IMR-90 (cell line): ENCODE measurements at regions of chr16 and their contacts with region 1.

Region 1: GRCh38 chr16:75198135-75198600 is 8.8 kb downstream of the CTRB2 start:
- DNase-seq: peak; percentile 53
- ATAC-seq: peak; percentile 80
- H3K4me3 ChIP-seq: no peak overlapping the region
- H3K27ac ChIP-seq: no peak overlapping the region
- H3K4me1 ChIP-seq: peaks cover 5% of the 10 kb centered on the region; the same call in 1 of the 2 replicates
- H3K27me3 ChIP-seq: peaks cover 10% of the 10 kb centered on the region; the same call in 1 of the 2 replicates
- CTCF ChIP-seq: no peak
- POLR2A ChIP-seq: no peak
- RAD21 ChIP-seq: no peak

Region 2: DNA sequence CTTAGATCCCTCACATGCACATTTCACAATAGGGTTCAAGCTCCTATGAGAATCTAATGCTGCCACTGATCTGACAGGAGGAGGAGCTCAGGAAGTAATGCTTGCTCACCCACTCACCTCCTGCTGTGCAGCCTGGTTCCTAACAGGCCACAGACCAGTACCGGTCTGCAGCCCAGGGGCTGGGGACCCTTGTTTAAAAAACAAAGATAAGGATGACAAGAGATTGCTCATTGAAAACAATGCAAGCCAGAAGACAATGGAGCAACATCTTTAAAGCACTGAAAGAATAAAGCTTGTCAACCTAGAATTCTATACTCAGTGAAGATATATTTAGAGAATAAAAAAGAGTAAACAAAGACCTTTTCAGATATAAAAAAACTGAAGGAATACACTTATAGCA is 400.8 kb before region 1 on chr16:
- CTCF ChIA-PET with region 1: no interaction called
- POLR2A ChIA-PET with region 1: no interaction called
- dilution Hi-C with region 1: no loop called
- in situ Hi-C with region 1: no loop called
- intact Hi-C with region 1: no loop called
- DNase-seq: no peak
- ATAC-seq: no peak
- H3K4me3 ChIP-seq: no peak overlapping the region
- H3K27ac ChIP-seq: no peak overlapping the region
- H3K4me1 ChIP-seq: no peaks in the 10 kb centered on the region
- H3K27me3 ChIP-seq: peaks cover 14% of the 10 kb centered on the region
- CTCF ChIP-seq: no peak
- POLR2A ChIP-seq: no peak
- RAD21 ChIP-seq: no peak

Region 3: GRCh38 chr16:74998481-74999218 is 199.5 kb before region 1 on chr16 and contains the start of gene ZNRF1:
- CTCF ChIA-PET with region 1: no interaction called
- POLR2A ChIA-PET with region 1: no interaction called
- dilution Hi-C with region 1: no loop called
- in situ Hi-C with region 1: no loop called
- intact Hi-C with region 1: loop called (anchors 2 kb)
- DNase-seq: peak; percentile 71
- ATAC-seq: peak; percentile 91
- H3K4me3 ChIP-seq: peak within 1 kb of the TSS; percentile 79
- H3K27ac ChIP-seq: peak within 1 kb of the TSS; percentile 62
- H3K4me1 ChIP-seq: peaks cover 10% of the 10 kb centered on the region
- H3K27me3 ChIP-seq: no peaks in the 10 kb centered on the region
- CTCF ChIP-seq: peak; percentile 73
- POLR2A ChIP-seq: 0 out of 2 replicates have a peak, but pooled peaks have one; percentile 10
- RAD21 ChIP-seq: peak; percentile 80
- total RNA-seq, gene ZNRF1: 8.2 and 9.7 TPM in 2 replicates

Region 4: GRCh38 chr16:75385507-75386152 is 187.5 kb after region 1 on chr16:
- CTCF ChIA-PET with region 1: interaction called, 6 read pairs
- POLR2A ChIA-PET with region 1: no interaction called
- dilution Hi-C with region 1: no loop called
- in situ Hi-C with region 1: no loop called
- intact Hi-C with region 1: loop called (anchors 1 kb)
- DNase-seq: peak; percentile 88
- ATAC-seq: peak; percentile 33
- H3K4me3 ChIP-seq: no peak overlapping the region
- H3K27ac ChIP-seq: no peak overlapping the region
- H3K4me1 ChIP-seq: peaks cover 21% of the 10 kb centered on the region
- H3K27me3 ChIP-seq: no peaks in the 10 kb centered on the region
- CTCF ChIP-seq: peak; percentile 74
- POLR2A ChIP-seq: no peak
- RAD21 ChIP-seq: peak; percentile 85

Region 5: GRCh38 chr16:75402821-75403475 is 204.8 kb after region 1 on chr16:
- CTCF ChIA-PET with region 1: interaction called, 12 read pairs
- POLR2A ChIA-PET with region 1: no interaction called
- dilution Hi-C with region 1: no loop called
- in situ Hi-C with region 1: no loop called
- intact Hi-C with region 1: loop called (anchors 1 kb)
- DNase-seq: peak; percentile 60
- ATAC-seq: peak; percentile 81
- H3K4me3 ChIP-seq: no peak overlapping the region
- H3K27ac ChIP-seq: no peak overlapping the region
- H3K4me1 ChIP-seq: peaks cover 4% of the 10 kb centered on the region; the same call in 1 of the 2 replicates
- H3K27me3 ChIP-seq: no peaks in the 10 kb centered on the region
- CTCF ChIP-seq: peak; percentile 72
- POLR2A ChIP-seq: no peak
- RAD21 ChIP-seq: peak; percentile 65

Region 6: GRCh38 chr16:75464130-75464918 is 266.2 kb after region 1 on chr16 and contains the start of gene TMEM170A:
- CTCF ChIA-PET with region 1: interaction called, 7 read pairs
- POLR2A ChIA-PET with region 1: no interaction called
- dilution Hi-C with region 1: no loop called
- in situ Hi-C with region 1: no loop called
- intact Hi-C with region 1: loop called (anchors 1 kb)
- DNase-seq: peak; percentile 98
- ATAC-seq: peak; percentile 93
- H3K4me3 ChIP-seq: peak within 1 kb of the TSS; percentile 85
- H3K27ac ChIP-seq: peak within 1 kb of the TSS; percentile 82
- H3K4me1 ChIP-seq: no peaks in the 10 kb centered on the region; the same call in 1 of the 2 replicates
- H3K27me3 ChIP-seq: no peaks in the 10 kb centered on the region
- CTCF ChIP-seq: peak; percentile 100; the same call in 1 of the 2 replicates
- POLR2A ChIP-seq: peak; percentile 90
- RAD21 ChIP-seq: peak; percentile 77
- total RNA-seq, gene TMEM170A: 10.9 and 16.7 TPM in 2 replicates

Region 7: DNA sequence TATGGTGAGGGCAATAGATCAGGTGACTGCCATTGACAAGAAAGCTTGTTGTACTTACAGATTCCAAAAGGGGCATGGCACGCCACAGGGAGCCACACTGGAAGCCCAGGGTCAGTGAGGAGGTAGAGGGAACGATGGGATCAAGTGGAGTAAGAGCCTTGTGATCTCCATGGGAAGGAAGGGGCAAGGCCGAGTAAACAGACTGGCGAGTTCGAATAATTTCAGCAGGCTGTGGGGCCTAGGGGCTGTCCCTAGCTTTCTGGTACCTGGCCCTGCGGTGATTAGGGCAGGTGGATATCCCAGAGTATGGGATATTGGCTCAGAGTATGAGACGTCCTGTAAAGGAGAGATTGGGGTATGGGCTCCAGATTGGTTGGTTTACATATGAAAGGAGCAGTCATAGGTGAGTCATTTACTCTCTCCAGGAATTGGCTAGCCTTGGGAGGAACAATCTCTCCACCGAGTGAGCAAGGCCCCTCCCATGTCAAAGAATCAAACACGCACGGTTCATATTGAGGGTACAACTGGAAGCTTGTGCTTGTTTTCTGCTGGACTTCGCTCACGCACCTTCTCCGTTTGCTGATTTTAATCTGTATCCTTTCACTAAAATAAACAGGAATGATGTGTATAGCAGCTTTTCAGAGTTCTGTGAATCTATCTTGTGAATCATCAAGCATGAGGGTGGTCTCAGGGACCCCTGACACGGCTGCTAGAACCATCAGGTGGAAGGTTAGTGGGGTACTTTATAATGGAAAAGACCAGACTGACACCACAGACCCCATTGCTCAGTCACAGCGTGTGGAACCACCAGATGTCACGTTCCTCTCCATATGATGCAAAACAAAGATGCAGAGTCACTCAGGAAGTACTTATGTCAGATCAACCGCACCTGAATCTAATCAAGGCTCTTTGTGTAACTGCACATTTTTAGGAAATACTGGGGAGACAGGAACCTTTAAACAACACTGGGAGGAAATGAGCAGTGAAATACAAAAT is 396.0 kb after region 1 on chr16:
- CTCF ChIA-PET with region 1: interaction called, 3 read pairs
- POLR2A ChIA-PET with region 1: no interaction called
- dilution Hi-C with region 1: no loop called
- in situ Hi-C with region 1: loop called (anchors 25 kb)
- intact Hi-C with region 1: loop called (anchors 1 kb)
- DNase-seq: peak; percentile 83
- ATAC-seq: peak; percentile 52; the same call in 1 of the 2 replicates
- H3K4me3 ChIP-seq: no peak overlapping the region
- H3K27ac ChIP-seq: no peak overlapping the region
- H3K4me1 ChIP-seq: peaks cover 6% of the 10 kb centered on the region
- H3K27me3 ChIP-seq: no peaks in the 10 kb centered on the region
- CTCF ChIP-seq: no peak
- POLR2A ChIP-seq: no peak
- RAD21 ChIP-seq: no peak

Region 8: DNA sequence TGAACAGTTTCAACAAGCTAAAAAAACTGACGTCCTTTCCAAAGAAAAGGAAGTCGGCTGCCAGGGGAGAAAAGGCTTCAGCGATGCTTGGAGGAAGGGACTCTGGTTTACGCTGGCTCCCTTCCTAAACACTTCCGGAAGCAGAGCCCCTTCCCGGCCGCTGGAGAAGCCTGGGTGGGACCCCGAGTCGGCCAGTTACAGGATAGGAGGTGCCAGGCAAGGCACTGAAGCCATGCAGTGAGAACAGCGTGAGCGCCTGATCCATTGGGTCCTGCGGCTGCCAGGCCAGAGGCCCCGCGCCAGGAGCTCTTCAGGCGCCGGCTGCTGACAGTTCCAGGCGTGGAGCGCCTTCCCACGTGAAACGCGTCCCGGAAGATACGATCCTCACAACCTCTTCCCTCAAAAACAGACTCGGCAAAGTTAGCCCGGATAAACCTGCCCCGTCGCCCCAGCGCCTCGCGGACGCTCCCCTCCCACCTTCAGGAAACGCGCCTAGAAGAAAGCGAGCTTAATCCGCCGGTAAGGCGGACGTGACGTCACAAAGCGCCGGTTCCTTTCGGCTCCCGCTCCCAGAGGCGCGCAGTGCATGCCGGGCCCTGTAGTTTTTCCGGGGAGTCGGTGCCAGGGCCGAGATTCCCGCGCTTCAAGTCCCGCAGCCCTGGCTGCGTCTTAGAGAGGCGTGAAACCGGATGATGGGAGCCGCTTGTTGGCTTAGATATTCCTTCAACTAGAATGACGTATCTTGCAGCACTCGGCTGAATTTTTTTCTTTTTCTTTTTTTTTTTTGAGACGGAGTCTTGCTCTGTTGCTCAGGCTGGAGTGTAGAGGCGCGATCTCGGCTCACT is 424.8 kb after region 1 on chr16 and contains the start of gene ADAT1:
- CTCF ChIA-PET with region 1: no interaction called
- POLR2A ChIA-PET with region 1: no interaction called
- dilution Hi-C with region 1: no loop called
- in situ Hi-C with region 1: no loop called
- intact Hi-C with region 1: loop called (anchors 10 kb)
- DNase-seq: peak; percentile 98
- ATAC-seq: peak; percentile 95
- H3K4me3 ChIP-seq: peak within 1 kb of the TSS; percentile 74
- H3K27ac ChIP-seq: peak within 1 kb of the TSS; percentile 71
- H3K4me1 ChIP-seq: peaks cover 5% of the 10 kb centered on the region
- H3K27me3 ChIP-seq: no peaks in the 10 kb centered on the region
- CTCF ChIP-seq: no peak
- POLR2A ChIP-seq: peak; percentile 77; the same call in 1 of the 2 replicates
- RAD21 ChIP-seq: no peak
- total RNA-seq, gene ADAT1: 36.7 and 52.9 TPM in 2 replicates